Body of pancreas (tissue), 4 donors: ENCODE measurements at regions of chr2 and their contacts with region 1.

Region 1: GRCh38 chr2:187499941-187500532 is 52.0 kb upstream of the CALCRL start:
- DNase-seq: peak; percentile 61 to 74 (median 72)
- ATAC-seq: peak; percentile 88
- H3K4me3 ChIP-seq: no peak overlapping the region
- H3K27ac ChIP-seq: no peak overlapping the region
- H3K4me1 ChIP-seq: no peaks in the 10 kb centered on the region
- H3K27me3 ChIP-seq: no peaks in the 10 kb centered on the region
- CTCF ChIP-seq: peak; percentile 76 to 97 (median 91)
- POLR2A ChIP-seq: no peak

Region 2: DNA sequence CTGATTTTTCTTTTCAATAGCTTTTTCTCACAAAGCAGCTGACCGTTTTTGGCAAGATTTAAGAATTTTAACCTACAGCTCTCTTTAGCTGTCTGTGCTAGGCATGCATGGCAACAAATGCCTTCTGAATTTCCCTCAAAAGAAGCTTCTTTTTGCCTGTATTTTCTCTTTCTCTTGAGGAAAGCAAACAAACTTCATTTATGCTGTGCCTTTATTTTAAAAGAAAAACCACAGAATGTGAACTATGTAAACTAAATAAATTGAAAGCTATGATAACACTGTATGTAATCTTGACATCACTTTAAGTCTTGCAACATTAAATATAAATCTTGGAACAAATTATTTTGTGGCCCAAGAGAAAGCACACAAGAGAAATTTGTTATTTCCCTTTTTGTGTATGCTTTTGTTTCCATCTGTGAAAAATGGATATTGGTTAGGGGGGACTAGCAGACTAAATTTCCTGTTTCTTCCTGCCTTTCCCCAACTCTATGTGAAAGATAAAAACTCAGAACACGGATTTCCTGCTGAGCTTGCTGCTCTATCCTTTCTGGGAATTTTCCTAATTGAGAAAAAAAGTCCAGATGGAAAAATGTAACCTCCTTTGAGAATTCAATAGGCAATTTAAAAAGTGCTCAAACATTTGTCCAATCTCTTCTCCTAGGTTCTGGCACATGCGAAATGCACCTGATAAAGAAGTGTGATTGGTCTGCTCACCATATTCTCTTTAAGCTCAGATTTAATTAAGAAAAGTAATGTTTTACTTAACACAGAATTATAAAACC is 75.1 kb after region 1 on chr2:
- intact Hi-C with region 1: loop called (anchors 5 kb)
- DNase-seq: no peak
- ATAC-seq: no peak
- H3K4me3 ChIP-seq: no peak overlapping the region
- H3K27ac ChIP-seq: no peak overlapping the region
- H3K4me1 ChIP-seq: no peaks in the 10 kb centered on the region
- H3K27me3 ChIP-seq: no peaks in the 10 kb centered on the region
- CTCF ChIP-seq: no peak
- POLR2A ChIP-seq: no peak

Region 3: DNA sequence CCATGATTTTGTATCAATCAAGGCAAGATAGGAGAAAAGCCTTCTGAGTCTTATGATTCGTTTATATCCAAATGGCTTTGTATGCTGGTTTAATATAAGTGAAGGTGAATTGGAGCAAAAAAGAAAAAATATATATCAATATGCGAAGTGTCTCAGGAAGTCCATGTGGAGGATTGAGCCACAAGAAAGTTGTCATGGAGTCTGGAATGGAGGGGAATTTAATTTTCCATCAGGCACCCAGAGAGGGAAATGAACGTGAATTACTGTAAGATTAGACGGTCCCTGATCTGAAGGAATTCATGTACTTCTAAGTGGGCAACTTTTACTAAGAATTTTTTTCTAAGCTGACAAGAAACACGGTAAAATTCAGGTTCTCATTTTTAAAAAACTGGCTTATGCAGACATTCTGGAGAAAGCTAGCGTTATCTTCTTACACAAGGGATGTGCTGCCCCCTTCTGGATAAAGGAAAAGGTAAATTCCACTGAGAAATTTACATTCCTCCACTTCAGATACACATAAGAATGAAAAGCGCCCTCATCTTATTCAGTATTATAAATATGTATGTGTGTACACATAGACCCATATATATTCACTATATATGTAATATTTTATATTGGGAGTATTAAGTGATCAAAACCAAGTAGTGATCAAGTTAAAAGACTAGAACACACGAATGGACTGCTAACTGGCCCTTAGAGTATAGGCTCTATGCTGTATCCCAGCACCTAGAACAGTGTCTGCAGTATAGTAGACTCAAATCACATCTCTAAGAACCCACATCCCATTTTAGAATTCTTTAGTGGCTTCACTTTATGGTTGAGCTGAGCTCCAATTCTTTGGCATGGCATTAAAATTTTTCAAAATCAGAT is 343.2 kb after region 1 on chr2:
- intact Hi-C with region 1: loop called (anchors 10 kb)
- DNase-seq: peak in 1 of 4 donors; percentile 37
- ATAC-seq: peak; percentile 80
- H3K4me3 ChIP-seq: no peak overlapping the region
- H3K27ac ChIP-seq: no peak overlapping the region
- H3K4me1 ChIP-seq: peaks cover 13% of the 10 kb centered on the region
- H3K27me3 ChIP-seq: no peaks in the 10 kb centered on the region
- CTCF ChIP-seq: peak; percentile 34 to 76 (median 59)
- POLR2A ChIP-seq: no peak